ENCODE measurements at regions of chr19 and their contacts with region 1.

Region 1: GRCh38 chr19:43983912-43984686 is at the start of gene ZNF155:
- DNase-seq: peak; percentile 95
- H3K4me3 ChIP-seq: peak within 1 kb of the TSS; percentile 41 to 59 (median 47)
- H3K27ac ChIP-seq: no peak within 1 kb of the TSS
- H3K4me1 ChIP-seq: no peaks in the 10 kb centered on the region
- H3K27me3 ChIP-seq: no peaks in the 10 kb centered on the region
- CTCF ChIP-seq: no peak
- total RNA-seq, gene ZNF155: 8.4 to 10.0 TPM

Region 2: DNA sequence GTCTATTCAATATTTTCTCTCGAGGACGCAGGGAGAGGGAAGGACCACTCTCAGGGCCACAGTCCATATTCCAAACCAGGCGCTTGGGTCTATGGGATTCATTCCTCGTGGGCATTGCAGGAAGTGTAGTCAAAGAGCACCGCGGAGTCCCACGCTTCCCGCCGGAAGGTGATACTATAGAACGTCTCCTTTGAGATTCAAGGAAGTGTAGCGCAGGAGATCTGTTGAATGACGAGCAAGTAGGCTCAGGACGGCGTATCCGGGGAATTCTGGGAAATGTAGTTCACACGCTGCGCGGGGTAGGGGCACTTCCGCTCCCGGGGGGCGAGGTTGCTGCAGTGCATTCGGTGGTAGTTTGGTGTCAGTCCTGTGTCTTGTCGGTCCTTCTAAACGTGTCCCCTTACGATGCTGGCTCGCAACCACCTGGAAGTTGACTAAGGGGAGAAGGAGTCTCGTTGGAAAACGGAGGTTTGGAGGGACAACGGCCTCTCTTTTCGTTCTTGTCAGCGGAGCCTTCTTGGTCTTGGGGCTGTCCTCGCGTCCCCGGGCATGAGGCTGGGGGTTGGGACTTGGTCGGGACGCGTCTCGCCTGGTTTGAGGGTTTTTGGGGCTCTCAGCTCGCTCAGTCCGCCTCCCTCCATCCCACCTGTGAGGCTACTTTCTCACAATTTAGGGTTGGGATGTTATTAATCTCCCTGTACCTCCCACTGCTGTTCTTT is 87.9 kb after region 1 on chr19 and contains the start of gene ZNF284:
- CTCF ChIA-PET with region 1: no interaction called
- dilution Hi-C with region 1: no loop called
- in situ Hi-C with region 1: no loop called
- intact Hi-C with region 1: loop called (anchors 5 kb)
- DNase-seq: peak; percentile 87
- H3K4me3 ChIP-seq: peak within 1 kb of the TSS; percentile 62 to 84 (median 75)
- H3K27ac ChIP-seq: peak within 1 kb of the TSS; percentile 2
- H3K4me1 ChIP-seq: peaks cover 9% of the 10 kb centered on the region
- H3K27me3 ChIP-seq: no peaks in the 10 kb centered on the region
- CTCF ChIP-seq: no peak
- total RNA-seq, gene ZNF284: 2.6 to 4.7 TPM

Region 3: DNA sequence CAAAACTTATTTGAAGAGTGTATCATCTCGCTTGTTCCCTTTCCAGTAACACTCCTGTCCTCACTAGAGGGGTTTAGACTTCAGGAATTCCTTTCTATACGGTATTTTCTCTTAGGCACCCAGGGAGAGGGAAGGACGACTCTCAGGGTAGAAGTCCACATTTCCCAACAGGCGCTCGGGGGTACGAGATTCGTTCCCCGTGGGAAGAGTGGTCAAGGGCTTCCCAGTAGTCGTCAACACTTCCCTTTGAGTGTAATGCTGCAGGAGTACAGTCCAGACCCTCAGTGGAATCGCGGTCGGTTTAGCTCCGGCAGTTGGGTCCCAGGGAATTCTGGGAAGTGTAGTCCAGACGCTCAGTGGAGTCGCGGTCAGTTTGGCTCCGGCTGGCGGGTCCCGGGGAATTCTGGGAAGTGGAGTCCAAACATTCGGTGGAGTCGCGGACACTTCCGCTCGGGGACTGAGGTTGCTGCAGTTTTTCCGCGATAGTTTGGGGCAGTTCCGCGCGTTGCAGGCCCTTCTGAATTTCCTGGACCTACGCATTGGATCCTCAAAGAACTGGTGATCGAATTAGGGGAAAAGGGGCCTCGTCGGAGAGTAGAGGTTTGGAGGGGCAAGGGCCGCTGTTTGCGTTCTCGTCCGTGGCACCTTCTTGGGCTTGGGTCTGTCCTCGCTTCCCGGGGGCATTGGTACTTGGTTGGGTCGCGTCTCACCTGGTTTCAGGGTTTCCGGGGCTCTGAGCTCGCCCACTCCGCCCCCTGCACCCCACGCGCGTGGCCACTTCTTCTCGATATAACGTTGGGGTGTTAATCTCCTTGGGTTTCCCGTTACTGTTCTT is 110.0 kb after region 1 on chr19 and contains the start of gene ZNF224:
- CTCF ChIA-PET with region 1: no interaction called
- dilution Hi-C with region 1: no loop called
- in situ Hi-C with region 1: no loop called
- intact Hi-C with region 1: loop called (anchors 5 kb)
- DNase-seq: peak; percentile 89
- H3K4me3 ChIP-seq: peak within 1 kb of the TSS; percentile 82 to 93 (median 89)
- H3K27ac ChIP-seq: peak within 1 kb of the TSS; percentile 49
- H3K4me1 ChIP-seq: no peaks in the 10 kb centered on the region
- H3K27me3 ChIP-seq: no peaks in the 10 kb centered on the region
- CTCF ChIP-seq: no peak
- total RNA-seq, gene ZNF224: 15.3 to 24.0 TPM